ENCODE measurements at regions of chr21 and their contacts with region 1.

Region 1: GRCh38 chr21:24118738-24119459 is 1488.4 kb downstream of the MRPL39 start:
- DNase-seq: peak; percentile 54
- ATAC-seq: peak; percentile 81
- H3K4me3 ChIP-seq: peak overlapping the region; percentile 39; the same call in 1 of the 2 replicates
- H3K27ac ChIP-seq: peak overlapping the region; percentile 50
- H3K4me1 ChIP-seq: peaks cover 32% of the 10 kb centered on the region
- H3K27me3 ChIP-seq: no peaks in the 10 kb centered on the region
- CTCF ChIP-seq: no peak

Region 2: GRCh38 chr21:24023402-24023801 is 95.5 kb before region 1 on chr21:
- CTCF ChIA-PET with region 1: no interaction called
- POLR2A ChIA-PET with region 1: no interaction called
- intact Hi-C with region 1: loop called (anchors 5 kb)
- DNase-seq: peak; percentile 81
- ATAC-seq: peak; percentile 98
- H3K4me3 ChIP-seq: peak overlapping the region; percentile 5; the same call in 1 of the 2 replicates
- H3K27ac ChIP-seq: peak overlapping the region; percentile 76
- H3K4me1 ChIP-seq: peaks cover 15% of the 10 kb centered on the region
- H3K27me3 ChIP-seq: no peaks in the 10 kb centered on the region
- CTCF ChIP-seq: no peak

Region 3: GRCh38 chr21:24259241-24259640 is 140.3 kb after region 1 on chr21:
- CTCF ChIA-PET with region 1: no interaction called
- POLR2A ChIA-PET with region 1: interaction called, 3 read pairs
- intact Hi-C with region 1: loop called (anchors 10 kb)
- DNase-seq: peak; percentile 64
- ATAC-seq: peak; percentile 94
- H3K4me3 ChIP-seq: no peak overlapping the region
- H3K27ac ChIP-seq: peak overlapping the region; percentile 39; the same call in 1 of the 2 replicates
- H3K4me1 ChIP-seq: peaks cover 4% of the 10 kb centered on the region; the same call in 1 of the 2 replicates
- H3K27me3 ChIP-seq: no peaks in the 10 kb centered on the region
- CTCF ChIP-seq: no peak

Region 4: GRCh38 chr21:24367936-24368335 is 249.0 kb after region 1 on chr21:
- CTCF ChIA-PET with region 1: no interaction called
- POLR2A ChIA-PET with region 1: no interaction called
- intact Hi-C with region 1: loop called (anchors 2 kb)
- DNase-seq: peak; percentile 65
- ATAC-seq: peak; percentile 95
- H3K4me3 ChIP-seq: no peak overlapping the region
- H3K27ac ChIP-seq: peak overlapping the region; percentile 40
- H3K4me1 ChIP-seq: peaks cover 8% of the 10 kb centered on the region
- H3K27me3 ChIP-seq: no peaks in the 10 kb centered on the region
- CTCF ChIP-seq: no peak

Region 5: DNA sequence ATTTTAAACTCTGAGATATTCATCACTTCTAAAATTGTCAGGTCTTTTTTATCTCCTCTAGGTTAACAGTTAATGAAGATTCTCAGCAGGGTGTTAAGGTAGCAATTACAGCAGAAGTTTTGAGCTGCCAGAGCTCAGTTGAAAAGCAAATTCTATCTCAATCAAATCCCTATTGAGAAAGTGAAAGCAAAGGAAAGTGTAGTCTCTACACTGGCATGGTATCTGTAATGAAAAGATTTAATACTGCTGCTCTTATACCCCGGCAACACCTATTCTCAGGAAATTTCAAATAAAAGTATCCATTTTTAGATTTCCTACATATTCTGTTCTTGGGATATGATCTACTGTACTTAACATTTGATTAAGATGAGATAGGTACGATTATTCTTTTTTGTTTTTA is 574.9 kb after region 1 on chr21:
- CTCF ChIA-PET with region 1: no interaction called
- POLR2A ChIA-PET with region 1: no interaction called
- intact Hi-C with region 1: loop called (anchors 10 kb)
- DNase-seq: peak; percentile 3
- ATAC-seq: no peak; the same call in 1 of the 2 replicates
- H3K4me3 ChIP-seq: peak overlapping the region; percentile 62
- H3K27ac ChIP-seq: no peak overlapping the region
- H3K4me1 ChIP-seq: no peaks in the 10 kb centered on the region
- H3K27me3 ChIP-seq: no peaks in the 10 kb centered on the region
- CTCF ChIP-seq: no peak